ENCODE measurements at regions of chr12 and their contacts with region 1.

Region 1: DNA sequence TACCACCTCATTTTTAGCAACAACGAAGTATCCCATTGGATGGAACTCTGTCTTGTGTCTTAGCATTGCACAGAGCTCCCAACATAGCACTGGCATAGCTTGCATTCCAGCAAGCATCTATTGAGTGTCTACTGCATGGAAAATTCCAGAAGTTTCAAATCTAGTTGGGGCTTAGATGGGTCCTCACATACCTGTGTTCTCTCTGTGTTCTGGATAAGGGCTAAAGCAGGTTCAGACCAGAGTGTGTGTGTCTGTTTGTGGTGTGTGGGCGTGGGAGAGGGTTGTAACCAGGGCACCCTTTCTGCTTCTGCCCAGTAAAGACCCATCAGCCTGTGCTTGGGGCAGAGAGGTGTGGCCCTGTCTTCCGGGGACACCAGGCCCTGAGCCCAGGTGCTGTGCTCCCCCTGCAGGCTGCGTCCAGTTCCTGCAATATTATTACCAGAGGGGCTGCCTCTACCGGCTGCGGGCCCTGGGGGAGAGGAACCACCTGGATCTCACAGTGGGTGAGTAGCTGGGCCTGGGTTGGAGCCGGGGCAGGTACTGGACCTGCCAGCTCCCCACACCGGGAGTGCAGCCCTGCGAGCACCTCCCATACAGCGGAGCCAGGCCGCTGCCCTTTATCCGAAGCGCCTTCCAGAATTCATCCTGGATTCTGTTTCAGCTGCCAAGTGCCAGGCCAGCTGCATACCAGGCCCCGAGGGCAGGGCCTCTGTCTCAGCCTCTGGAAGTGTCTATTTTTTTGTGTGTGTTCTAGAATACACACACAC is 20.3 kb downstream of the RHOF start:
- DNase-seq: peak; percentile 62 to 76 (median 75)
- H3K4me3 ChIP-seq: no peak overlapping the region
- H3K27ac ChIP-seq: no peak overlapping the region
- H3K4me1 ChIP-seq: peaks cover 0 to 11% (median 8%) of the 10 kb centered on the region in 4 experiments
- H3K27me3 ChIP-seq: no peaks in the 10 kb centered on the region

Region 2: DNA sequence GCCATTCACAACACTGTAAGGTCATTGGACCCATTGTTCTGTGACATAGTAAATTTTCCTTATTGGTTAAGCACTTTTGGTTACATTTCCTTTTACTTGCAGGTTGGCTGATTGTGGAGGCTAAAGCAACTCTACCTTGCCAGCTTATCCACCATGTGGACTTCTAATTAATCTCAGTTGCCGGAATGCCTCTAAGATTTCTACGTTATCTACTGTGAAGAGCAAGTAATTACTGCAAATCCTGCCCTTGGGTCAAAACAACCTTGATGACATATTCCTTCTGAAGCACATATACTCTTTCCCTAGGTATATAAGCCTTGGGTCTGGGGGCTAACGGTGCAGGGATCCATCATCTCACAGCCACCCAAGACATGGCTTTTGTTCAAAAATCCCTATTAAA is 84.2 kb before region 1 on chr12:
- CTCF ChIA-PET with region 1: interaction called, 26 read pairs
- POLR2A ChIA-PET with region 1: no interaction called
- DNase-seq: no peak
- H3K4me3 ChIP-seq: no peak overlapping the region
- H3K27ac ChIP-seq: no peak overlapping the region
- H3K4me1 ChIP-seq: peaks cover 0 to 5% (median 2%) of the 10 kb centered on the region in 4 experiments
- H3K27me3 ChIP-seq: no peaks in the 10 kb centered on the region

Region 3: DNA sequence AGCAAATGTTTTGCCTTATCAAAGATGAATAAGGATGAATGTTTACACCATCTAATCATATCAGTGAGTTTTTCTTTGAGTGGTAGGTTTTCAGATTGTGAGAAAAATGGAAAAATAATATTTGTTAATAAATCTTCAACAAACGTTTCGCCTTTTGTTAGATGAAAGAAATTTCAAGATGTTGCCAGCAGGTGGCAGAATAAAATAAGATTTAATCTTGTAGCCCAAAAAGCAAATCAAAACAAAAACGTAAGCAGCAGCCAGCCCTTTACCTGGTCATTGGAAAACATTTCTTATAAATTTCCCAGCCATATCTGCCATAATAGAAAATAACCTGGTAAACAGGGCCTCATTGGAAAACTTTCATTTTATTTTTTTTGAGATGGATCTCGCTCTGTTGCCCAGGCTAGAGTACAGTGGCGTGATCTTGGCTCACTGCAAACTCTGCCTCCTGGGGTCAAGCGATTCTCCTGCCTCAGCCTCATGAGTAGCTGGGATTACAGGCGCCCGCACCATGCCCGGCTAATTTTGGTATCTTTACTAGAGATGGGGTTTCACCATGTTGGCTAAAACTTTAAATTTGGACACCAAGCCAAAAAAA is 76.0 kb before region 1 on chr12:
- CTCF ChIA-PET with region 1: interaction called, 54 read pairs
- POLR2A ChIA-PET with region 1: interaction called, 4 read pairs
- DNase-seq: peak; percentile 58 to 75 (median 60)
- H3K4me3 ChIP-seq: no peak overlapping the region
- H3K27ac ChIP-seq: no peak overlapping the region
- H3K4me1 ChIP-seq: peaks cover 0 to 3% (median 0%) of the 10 kb centered on the region in 4 experiments
- H3K27me3 ChIP-seq: no peaks in the 10 kb centered on the region

Region 4: GRCh38 chr12:121894633-121895032 is 121.4 kb after region 1 on chr12:
- CTCF ChIA-PET with region 1: interaction called, 11 read pairs
- POLR2A ChIA-PET with region 1: no interaction called
- DNase-seq: peak; percentile 35 to 44 (median 43)
- H3K4me3 ChIP-seq: no peak overlapping the region
- H3K27ac ChIP-seq: peak overlapping the region in 1 of 2 experiments; percentile 64
- H3K4me1 ChIP-seq: peaks cover 2 to 17% (median 5%) of the 10 kb centered on the region in 4 experiments
- H3K27me3 ChIP-seq: no peaks in the 10 kb centered on the region